Endothelial cell of umbilical vein (primary cell): ENCODE measurements at regions of chr5 and their contacts with region 1.

Region 1: DNA sequence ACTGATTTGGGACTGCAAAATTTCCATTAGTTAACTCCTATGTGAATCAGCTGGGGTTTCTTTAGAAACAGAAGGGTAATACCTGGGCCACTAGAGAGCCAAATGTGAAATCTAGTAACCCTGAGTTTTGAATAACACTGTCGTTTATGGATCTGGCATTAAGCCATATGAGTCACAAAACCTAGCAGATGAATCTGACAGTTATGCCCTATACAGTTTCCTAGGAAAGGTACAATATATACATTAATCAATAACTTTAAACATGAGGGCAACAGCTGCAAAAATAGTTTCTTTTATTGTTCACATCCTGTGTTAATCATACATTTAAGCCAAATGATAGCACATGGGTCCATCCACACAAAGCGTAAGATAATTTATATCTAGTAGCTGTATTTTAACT is 56.9 kb downstream of the PAM start:
- DNase-seq: peak; percentile 85
- H3K4me3 ChIP-seq: no peak overlapping the region
- H3K27ac ChIP-seq: peak overlapping the region; percentile 19
- H3K4me1 ChIP-seq: peaks cover 31% of the 10 kb centered on the region
- H3K27me3 ChIP-seq: no peaks in the 10 kb centered on the region
- CTCF ChIP-seq: no peak
- POLR2A ChIP-seq: no peak

Region 2: DNA sequence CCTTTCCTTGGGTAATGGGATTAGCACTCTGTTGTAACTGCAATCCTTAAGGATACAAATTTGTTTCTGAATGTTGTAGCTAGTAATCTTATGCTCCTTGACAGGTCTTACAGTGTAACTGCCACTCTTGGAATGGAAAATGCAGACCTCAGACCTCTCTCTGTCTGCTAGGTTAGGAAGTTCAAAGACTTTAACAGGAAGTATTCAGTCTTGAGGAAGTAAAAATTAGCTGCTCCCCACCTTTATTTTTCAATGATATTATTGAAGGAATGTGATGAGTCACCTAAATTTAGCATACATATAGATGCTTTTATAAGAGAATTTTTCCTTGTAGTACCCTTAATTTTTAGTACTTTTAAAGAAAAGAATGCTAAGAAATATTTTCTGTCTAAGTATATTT is 14.7 kb after region 1 on chr5:
- CTCF ChIA-PET with region 1: interaction called, 10 read pairs
- POLR2A ChIA-PET with region 1: no interaction called
- dilution Hi-C with region 1: no loop called
- intact Hi-C with region 1: no loop called
- DNase-seq: peak; percentile 27
- H3K4me3 ChIP-seq: no peak overlapping the region
- H3K27ac ChIP-seq: no peak overlapping the region
- H3K4me1 ChIP-seq: peaks cover 10% of the 10 kb centered on the region
- H3K27me3 ChIP-seq: no peaks in the 10 kb centered on the region
- CTCF ChIP-seq: no peak
- POLR2A ChIP-seq: no peak

Region 3: GRCh38 chr5:103178167-103178566 is 366.2 kb after region 1 on chr5:
- CTCF ChIA-PET with region 1: no interaction called
- POLR2A ChIA-PET with region 1: no interaction called
- dilution Hi-C with region 1: no loop called
- intact Hi-C with region 1: no loop called
- DNase-seq: no peak
- H3K4me3 ChIP-seq: no peak overlapping the region
- H3K27ac ChIP-seq: no peak overlapping the region
- H3K4me1 ChIP-seq: no peaks in the 10 kb centered on the region
- H3K27me3 ChIP-seq: no peaks in the 10 kb centered on the region
- CTCF ChIP-seq: no peak
- POLR2A ChIP-seq: no peak